Activated CD4-positive, alpha-beta memory T cell treated with anti-CD3 and anti-CD28 coated beads for 36 hours (primary cell): ENCODE measurements at regions of chr3 and their contacts with region 1.

Region 1: GRCh38 chr3:122484985-122485384 is 29.8 kb downstream of the KPNA1 start:
- DNase-seq: no peak
- H3K4me3 Mint-ChIP-seq: no peak overlapping the region
- H3K27ac Mint-ChIP-seq: no peak overlapping the region
- H3K4me1 Mint-ChIP-seq: peaks cover 53% of the 10 kb centered on the region
- H3K27me3 Mint-ChIP-seq: no peaks in the 10 kb centered on the region

Region 2: GRCh38 chr3:122365073-122365472 is 119.9 kb before region 1 on chr3:
- CTCF ChIA-PET with region 1: no interaction called
- POLR2A ChIA-PET with region 1: no interaction called
- intact Hi-C with region 1: loop called (anchors 1 kb)
- DNase-seq: no peak
- H3K4me3 Mint-ChIP-seq: no peak overlapping the region
- H3K27ac Mint-ChIP-seq: peak overlapping the region; percentile 94
- H3K4me1 Mint-ChIP-seq: peaks cover 26% of the 10 kb centered on the region
- H3K27me3 Mint-ChIP-seq: no peaks in the 10 kb centered on the region

Region 3: DNA sequence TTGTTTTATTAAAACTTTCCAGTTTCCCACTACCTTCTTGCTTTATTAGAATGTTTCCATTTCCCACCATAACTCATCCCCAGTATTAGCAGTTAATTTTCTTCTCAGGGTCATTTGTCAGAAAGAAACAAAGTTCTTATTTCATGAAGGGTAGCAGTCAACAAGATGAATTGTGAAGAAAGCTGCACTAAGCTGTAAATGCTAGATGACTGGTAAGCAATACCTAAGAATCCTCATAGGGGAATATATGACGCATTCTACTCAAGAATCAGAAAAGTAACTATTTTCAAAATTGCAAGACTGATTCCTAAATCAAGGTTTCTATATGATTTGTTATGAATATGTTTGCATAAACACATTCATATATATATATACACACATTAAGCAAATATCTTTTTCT is 20.3 kb before region 1 on chr3:
- CTCF ChIA-PET with region 1: interaction called, 3 read pairs
- POLR2A ChIA-PET with region 1: no interaction called
- intact Hi-C with region 1: loop called (anchors 1 kb)
- DNase-seq: no peak
- H3K4me3 Mint-ChIP-seq: no peak overlapping the region
- H3K27ac Mint-ChIP-seq: peak overlapping the region; percentile 4
- H3K4me1 Mint-ChIP-seq: peaks cover 27% of the 10 kb centered on the region
- H3K27me3 Mint-ChIP-seq: no peaks in the 10 kb centered on the region

Region 4: GRCh38 chr3:122533931-122534334 is 48.9 kb after region 1 on chr3:
- CTCF ChIA-PET with region 1: no interaction called
- POLR2A ChIA-PET with region 1: no interaction called
- intact Hi-C with region 1: loop called (anchors 1 kb)
- DNase-seq: peak; percentile 65
- H3K4me3 Mint-ChIP-seq: no peak overlapping the region
- H3K27ac Mint-ChIP-seq: peak overlapping the region; percentile 35
- H3K4me1 Mint-ChIP-seq: peaks cover 37% of the 10 kb centered on the region
- H3K27me3 Mint-ChIP-seq: no peaks in the 10 kb centered on the region

Region 5: DNA sequence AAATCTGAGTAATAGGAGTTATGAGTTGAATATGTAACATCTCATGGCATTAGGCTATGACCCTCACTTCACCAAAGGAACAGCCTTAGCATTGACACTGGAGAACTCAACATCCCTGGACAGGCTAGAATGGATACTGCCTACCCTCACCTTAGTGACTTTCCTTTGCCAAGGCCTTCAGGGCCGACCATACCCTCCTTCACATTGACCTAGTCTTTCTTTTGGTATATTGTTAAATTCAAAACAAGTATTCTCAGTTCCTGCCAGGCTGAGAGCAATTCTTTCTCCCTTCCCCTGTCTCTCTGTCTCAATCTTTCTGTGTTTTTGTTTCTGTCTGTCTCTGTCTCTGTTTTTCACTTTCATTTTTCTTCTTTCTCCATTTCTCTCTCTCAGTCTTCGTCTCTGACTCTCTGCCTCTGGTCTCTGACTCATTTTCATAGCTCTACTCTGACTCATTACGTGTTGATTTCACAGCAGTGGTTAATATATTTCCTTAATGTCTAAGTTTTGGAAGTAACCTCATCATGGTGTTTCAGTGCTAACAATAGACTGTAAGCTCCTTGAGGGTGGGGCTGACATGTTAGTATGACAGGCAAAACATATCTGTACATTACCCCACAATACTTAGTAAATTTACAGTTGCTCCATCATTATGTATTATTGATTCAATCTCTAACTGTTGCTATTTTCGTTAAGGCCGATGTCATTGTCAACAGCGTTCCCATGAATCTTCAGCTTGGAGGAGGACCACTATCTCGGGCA is 125.0 kb after region 1 on chr3:
- CTCF ChIA-PET with region 1: no interaction called
- POLR2A ChIA-PET with region 1: no interaction called
- intact Hi-C with region 1: loop called (anchors 1 kb)
- DNase-seq: peak; percentile 37
- H3K4me3 Mint-ChIP-seq: peak overlapping the region; percentile 17
- H3K27ac Mint-ChIP-seq: peak overlapping the region; percentile 87
- H3K4me1 Mint-ChIP-seq: peaks cover 21% of the 10 kb centered on the region
- H3K27me3 Mint-ChIP-seq: no peaks in the 10 kb centered on the region

Region 6: DNA sequence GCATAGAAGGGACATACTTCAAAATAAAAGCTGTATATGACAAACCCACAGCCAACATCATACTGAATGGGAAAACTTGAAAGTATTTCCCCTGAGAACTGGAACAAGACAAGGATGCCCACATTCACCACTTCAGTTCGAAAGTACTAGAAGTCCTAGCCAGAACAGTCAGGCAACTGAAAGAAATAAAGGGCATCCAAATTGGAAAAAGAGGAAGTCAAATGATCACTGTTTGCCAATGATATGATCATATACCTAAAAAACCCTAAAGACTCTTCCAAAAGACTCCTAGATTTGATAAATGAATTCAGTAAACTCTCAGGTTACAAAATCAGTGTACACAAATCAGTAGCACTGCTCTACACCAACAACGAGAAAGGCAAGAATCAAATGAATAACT is 350.6 kb after region 1 on chr3:
- CTCF ChIA-PET with region 1: no interaction called
- POLR2A ChIA-PET with region 1: no interaction called
- intact Hi-C with region 1: no loop called
- DNase-seq: no peak
- H3K4me3 Mint-ChIP-seq: no peak overlapping the region
- H3K27ac Mint-ChIP-seq: no peak overlapping the region
- H3K4me1 Mint-ChIP-seq: no peaks in the 10 kb centered on the region
- H3K27me3 Mint-ChIP-seq: no peaks in the 10 kb centered on the region